ENCODE measurements at regions of chr16 and their contacts with region 1.

Region 1: DNA sequence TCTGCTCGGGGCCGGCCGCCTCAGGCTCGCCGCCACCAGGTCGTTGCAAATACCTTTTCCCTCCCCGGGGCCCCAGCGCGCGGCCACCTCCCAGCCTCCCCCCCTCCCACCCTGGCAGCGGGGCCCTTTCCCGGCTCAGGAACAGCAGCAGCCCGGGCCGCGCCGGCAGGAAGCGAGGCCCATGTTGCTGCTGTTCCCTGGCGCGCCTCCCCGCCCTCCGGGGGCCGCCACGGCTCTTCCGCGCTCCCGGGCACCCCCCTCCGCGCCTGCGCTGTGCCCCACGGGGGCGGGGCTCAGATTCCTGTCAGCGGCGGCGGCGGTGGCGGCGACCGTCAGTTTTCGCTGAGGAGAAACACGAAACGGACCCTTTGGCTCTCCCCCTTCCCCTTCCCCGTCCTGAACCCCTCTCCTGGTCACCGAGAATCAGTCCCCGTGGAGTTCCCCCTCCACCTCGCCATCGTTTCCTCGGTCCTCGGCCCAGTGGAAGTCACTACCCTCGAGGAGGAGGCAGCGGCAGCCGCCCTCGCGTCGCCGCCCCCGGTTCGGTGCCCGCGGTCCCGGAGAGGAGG is at the start of gene NFAT5:
- DNase-seq: peak; percentile 86 to 88
- ATAC-seq: peak; percentile 87 to 95 (median 91)
- H3K4me3 ChIP-seq: peak within 1 kb of the TSS; percentile 75 to 97 (median 90)
- H3K27ac ChIP-seq: peak within 1 kb of the TSS; percentile 96 to 100 (median 98)
- H3K4me1 ChIP-seq: peaks cover 2 to 51% (median 44%) of the 10 kb centered on the region in 9 donors
- H3K27me3 ChIP-seq: no peaks in the 10 kb centered on the region
- CTCF ChIP-seq: peak in 2 of 9 donors; percentile 33 to 37
- total RNA-seq, gene NFAT5: 14.6 to 23.7 (median 21.5) TPM

Region 2: GRCh38 chr16:69186642-69187445 is 378.9 kb before region 1 on chr16 and contains the start of gene SNTB2:
- intact Hi-C with region 1: no loop called
- DNase-seq: peak; percentile 92 to 94
- ATAC-seq: peak; percentile 96 to 99 (median 99)
- H3K4me3 ChIP-seq: peak within 1 kb of the TSS; percentile 61 to 90 (median 78)
- H3K27ac ChIP-seq: peak within 1 kb of the TSS; percentile 78 to 91 (median 86)
- H3K4me1 ChIP-seq: peaks cover 0 to 49% (median 28%) of the 10 kb centered on the region in 9 donors
- H3K27me3 ChIP-seq: no peaks in the 10 kb centered on the region
- CTCF ChIP-seq: no peak
- total RNA-seq, gene SNTB2: 8.1 to 15.7 (median 9.5) TPM

Region 3: GRCh38 chr16:69424053-69424934 is 141.5 kb before region 1 on chr16 and contains the start of gene CYB5B:
- intact Hi-C with region 1: loop called in 2 of 10 experiments (anchors 10 kb)
- DNase-seq: peak; percentile 87 to 97
- ATAC-seq: peak; percentile 97 to 99 (median 99)
- H3K4me3 ChIP-seq: peak within 1 kb of the TSS; percentile 59 to 94 (median 75)
- H3K27ac ChIP-seq: peak within 1 kb of the TSS; percentile 26 to 93 (median 80)
- H3K4me1 ChIP-seq: peaks cover 0 to 23% (median 17%) of the 10 kb centered on the region in 9 donors
- H3K27me3 ChIP-seq: no peaks in the 10 kb centered on the region
- CTCF ChIP-seq: no peak
- total RNA-seq, gene CYB5B: 59.8 to 84.2 (median 72.5) TPM

Region 4: DNA sequence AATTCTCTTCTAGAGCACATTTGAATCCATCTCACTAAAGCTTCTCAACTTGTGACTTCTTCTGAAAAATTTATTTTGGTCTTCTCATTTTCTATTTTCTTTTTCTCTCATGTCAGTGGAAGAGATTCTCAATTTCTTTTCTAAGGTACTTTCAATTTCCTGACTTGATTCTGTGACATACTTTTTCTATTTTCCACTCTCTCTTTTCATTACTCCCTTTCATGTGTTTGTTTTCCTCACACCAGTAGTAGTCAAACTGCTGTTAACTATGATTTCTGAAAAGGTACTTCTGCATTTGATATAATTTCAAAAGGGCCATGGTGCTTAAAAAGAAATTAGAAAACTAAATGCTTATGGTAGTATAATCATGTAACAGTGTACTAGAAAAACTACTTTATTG is 41.9 kb after region 1 on chr16:
- intact Hi-C with region 1: no loop called
- DNase-seq: no peak
- ATAC-seq: no peak
- H3K4me3 ChIP-seq: no peak overlapping the region
- H3K27ac ChIP-seq: no peak overlapping the region
- H3K4me1 ChIP-seq: peaks cover 7 to 42% (median 26%) of the 10 kb centered on the region in 9 donors
- H3K27me3 ChIP-seq: no peaks in the 10 kb centered on the region
- CTCF ChIP-seq: no peak

Region 5: DNA sequence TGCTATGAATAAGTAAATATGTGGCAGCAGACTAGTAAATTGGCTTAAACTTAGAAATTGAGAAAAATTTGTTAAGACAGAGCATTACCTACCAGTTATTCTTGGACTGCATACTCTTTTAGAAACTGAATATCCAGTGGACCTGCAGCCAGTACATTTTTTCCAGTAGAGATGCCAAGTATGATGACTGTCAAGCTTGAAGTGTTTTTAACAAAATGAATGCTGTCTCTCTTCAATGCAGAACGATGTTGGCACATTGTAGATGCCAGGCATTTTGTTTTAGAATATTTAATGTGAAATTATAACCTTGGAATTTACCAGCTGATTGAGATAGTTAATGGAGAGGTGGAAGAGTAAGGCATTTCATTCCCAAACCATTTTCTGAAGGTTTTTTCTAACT is 52.6 kb after region 1 on chr16:
- intact Hi-C with region 1: loop called in 2 of 10 experiments (anchors 5 kb)
- DNase-seq: peak in 1 of 2 donors; percentile 27
- ATAC-seq: peak in 7 of 8 donors; percentile 55 to 81 (median 73)
- H3K4me3 ChIP-seq: no peak overlapping the region
- H3K27ac ChIP-seq: peak overlapping the region in 8 of 10 donors; percentile 18 to 62 (median 54)
- H3K4me1 ChIP-seq: peaks cover 5 to 79% (median 58%) of the 10 kb centered on the region in 9 donors
- H3K27me3 ChIP-seq: no peaks in the 10 kb centered on the region
- CTCF ChIP-seq: no peak

Region 6: GRCh38 chr16:69632836-69633235 is 67.1 kb after region 1 on chr16:
- intact Hi-C with region 1: no loop called
- DNase-seq: no peak
- ATAC-seq: no peak
- H3K4me3 ChIP-seq: no peak overlapping the region
- H3K27ac ChIP-seq: no peak overlapping the region
- H3K4me1 ChIP-seq: no peaks in the 10 kb centered on the region
- H3K27me3 ChIP-seq: no peaks in the 10 kb centered on the region
- CTCF ChIP-seq: no peak

Region 7: DNA sequence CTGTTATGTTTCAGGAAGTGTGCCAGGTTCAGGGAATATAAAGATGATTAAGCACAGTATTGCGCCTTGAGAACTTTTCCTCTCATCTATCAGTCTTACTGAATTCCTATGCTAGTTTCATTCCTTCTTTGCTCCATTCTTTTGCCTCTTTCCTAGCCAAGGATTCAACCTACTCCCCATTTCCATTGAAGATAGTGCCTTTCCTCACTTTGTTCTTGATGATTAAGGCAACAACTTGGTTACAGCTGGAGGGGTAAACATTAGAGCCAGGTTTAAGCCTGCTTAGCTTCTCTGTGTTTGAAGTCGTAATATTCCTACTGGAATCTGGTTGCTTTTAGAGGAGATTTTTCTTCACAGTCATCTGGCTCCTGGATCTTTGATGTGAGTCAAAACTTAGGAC is 85.5 kb after region 1 on chr16:
- intact Hi-C with region 1: loop called in 2 of 10 experiments (anchors 10 kb)
- DNase-seq: no peak
- ATAC-seq: no peak
- H3K4me3 ChIP-seq: no peak overlapping the region
- H3K27ac ChIP-seq: no peak overlapping the region
- H3K4me1 ChIP-seq: no peaks in the 10 kb centered on the region
- H3K27me3 ChIP-seq: no peaks in the 10 kb centered on the region
- CTCF ChIP-seq: no peak

Measured in heart right ventricle (tissue), 16 donors.